Caco-2 (cell line): ENCODE measurements at regions of chrX and their contacts with region 1.

Region 1: DNA sequence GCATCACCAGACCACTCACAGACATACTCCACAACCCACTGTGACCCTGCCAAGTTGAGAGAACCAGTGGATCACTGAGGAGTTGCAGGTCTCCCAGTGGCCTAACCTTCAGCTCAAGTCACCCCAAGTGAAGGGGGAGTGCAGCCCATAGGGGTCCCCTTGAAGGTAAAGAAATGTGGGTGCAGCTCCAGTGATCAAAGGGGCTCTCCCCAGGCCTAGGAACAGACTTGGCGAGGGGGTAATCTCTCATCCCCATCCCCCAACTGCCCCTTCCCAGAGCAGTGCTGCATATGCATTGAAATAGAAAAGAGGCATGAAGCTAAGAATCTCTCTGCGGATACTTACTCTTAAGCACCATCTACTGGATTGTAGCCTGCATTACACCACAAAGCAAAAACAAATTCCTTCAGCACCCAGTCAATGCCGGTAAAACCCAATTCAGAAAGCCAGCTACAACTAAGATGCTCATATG is 27.0 kb downstream of the MAGEE1 start:
- DNase-seq: peak in 1 of 2 experiments; percentile 8
- H3K4me3 ChIP-seq: no peak overlapping the region
- H3K4me3 Mint-ChIP-seq: no peak overlapping the region
- H3K27ac Mint-ChIP-seq: no peak overlapping the region
- H3K4me1 ChIP-seq: no peaks in the 10 kb centered on the region
- H3K4me1 Mint-ChIP-seq: no peaks in the 10 kb centered on the region
- H3K27me3 ChIP-seq: no peaks in the 10 kb centered on the region
- H3K27me3 Mint-ChIP-seq: no peaks in the 10 kb centered on the region
- CTCF ChIP-seq: peak; percentile 23 to 48

Region 2: GRCh38 chrX:76427560-76428242 is 26.8 kb before region 1 on chrX and contains the start of gene MAGEE1:
- CTCF ChIA-PET with region 1: no interaction called
- POLR2A ChIA-PET with region 1: no interaction called
- intact Hi-C with region 1: loop called (anchors 1 kb)
- DNase-seq: peak; percentile 62 to 63
- H3K4me3 ChIP-seq: peak within 1 kb of the TSS; percentile 41
- H3K4me3 Mint-ChIP-seq: peak within 1 kb of the TSS; percentile 80
- H3K27ac Mint-ChIP-seq: no peak within 1 kb of the TSS
- H3K4me1 ChIP-seq: no peaks in the 10 kb centered on the region
- H3K4me1 Mint-ChIP-seq: no peaks in the 10 kb centered on the region
- H3K27me3 ChIP-seq: no peaks in the 10 kb centered on the region
- H3K27me3 Mint-ChIP-seq: no peaks in the 10 kb centered on the region
- CTCF ChIP-seq: no peak
- total RNA-seq, gene MAGEE1: 0.56 and 0.66 TPM in 2 replicates

Region 3: GRCh38 chrX:76996641-76997040 is 542.1 kb after region 1 on chrX:
- CTCF ChIA-PET with region 1: no interaction called
- POLR2A ChIA-PET with region 1: no interaction called
- intact Hi-C with region 1: no loop called
- DNase-seq: no peak
- H3K4me3 ChIP-seq: no peak overlapping the region
- H3K4me3 Mint-ChIP-seq: no peak overlapping the region
- H3K27ac Mint-ChIP-seq: no peak overlapping the region
- H3K4me1 ChIP-seq: no peaks in the 10 kb centered on the region
- H3K4me1 Mint-ChIP-seq: no peaks in the 10 kb centered on the region
- H3K27me3 ChIP-seq: no peaks in the 10 kb centered on the region
- H3K27me3 Mint-ChIP-seq: no peaks in the 10 kb centered on the region
- CTCF ChIP-seq: no peak